ENCODE measurements at regions of chr1 and their contacts with region 1.

Region 1: DNA sequence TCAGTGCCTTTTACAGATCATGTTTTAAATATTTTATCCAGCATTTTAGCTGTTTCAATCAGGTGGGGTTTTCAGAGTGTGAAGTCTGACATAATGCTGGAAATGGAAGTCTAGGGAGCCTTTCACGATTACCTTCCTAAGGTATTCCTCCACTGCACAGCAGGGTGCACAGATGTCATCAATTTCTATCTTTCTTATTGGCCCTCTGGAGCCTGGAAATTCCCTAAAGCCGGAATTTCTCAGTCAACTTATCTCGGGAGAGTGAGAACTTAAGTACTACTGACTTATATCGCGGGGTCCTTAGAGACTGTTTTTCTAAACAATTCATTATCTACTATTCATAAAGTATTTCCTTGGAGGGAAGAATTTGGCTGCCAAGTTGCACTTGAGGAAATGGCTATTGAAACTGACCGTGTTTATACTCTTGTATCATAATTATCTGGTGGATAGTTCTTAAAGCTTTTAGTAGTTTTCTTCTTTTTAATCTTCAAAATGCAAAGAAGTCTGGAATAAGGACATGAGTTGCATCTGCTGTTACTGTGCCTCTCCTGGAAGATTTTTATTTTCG is 311.8 kb upstream of the B3GALT2 start:
- DNase-seq: no peak
- H3K4me3 Mint-ChIP-seq: no peak overlapping the region
- H3K27ac Mint-ChIP-seq: no peak overlapping the region
- H3K4me1 Mint-ChIP-seq: peaks cover 10% of the 10 kb centered on the region
- H3K27me3 Mint-ChIP-seq: no peaks in the 10 kb centered on the region
- CTCF ChIP-seq: no peak

Region 2: DNA sequence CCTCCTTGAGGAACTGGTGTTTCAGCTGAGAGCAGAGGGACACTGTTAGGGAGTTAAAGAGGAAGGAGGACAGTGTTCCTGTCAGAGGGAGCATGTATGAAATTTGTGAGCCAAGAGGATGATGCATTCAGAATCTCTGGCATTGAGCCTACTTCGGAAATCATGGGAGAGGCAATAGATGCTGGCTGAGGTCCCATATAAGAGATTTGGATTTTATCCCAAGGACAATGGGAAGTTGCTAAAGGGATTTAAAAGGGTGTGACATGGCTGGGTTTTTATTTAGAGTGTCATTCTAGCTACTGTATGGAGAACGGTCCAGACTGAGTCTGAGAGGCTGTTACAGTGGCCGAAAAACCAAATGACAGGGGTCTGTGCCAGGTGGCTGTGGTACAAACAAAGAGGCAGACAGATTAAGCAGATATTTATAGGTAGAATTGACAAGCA is 91.4 kb after region 1 on chr1:
- CTCF ChIA-PET with region 1: interaction called, 11 read pairs
- intact Hi-C with region 1: no loop called
- DNase-seq: no peak
- H3K4me3 Mint-ChIP-seq: no peak overlapping the region
- H3K27ac Mint-ChIP-seq: no peak overlapping the region
- H3K4me1 Mint-ChIP-seq: no peaks in the 10 kb centered on the region
- H3K27me3 Mint-ChIP-seq: no peaks in the 10 kb centered on the region
- CTCF ChIP-seq: no peak